ENCODE measurements at regions of chr13 and their contacts with region 1.

Region 1: GRCh38 chr13:19863323-19864023 is at the start of gene ZMYM5:
- DNase-seq: peak; percentile 90 to 95 (median 92)
- H3K4me3 ChIP-seq: peak within 1 kb of the TSS; percentile 61 to 96
- H3K4me3 Mint-ChIP-seq: peak within 1 kb of the TSS; percentile 96 to 99 (median 98)
- H3K27ac ChIP-seq: peak within 1 kb of the TSS; percentile 81
- H3K27ac Mint-ChIP-seq: peak within 1 kb of the TSS; percentile 90 to 98 (median 96)
- H3K4me1 ChIP-seq: peaks cover 33% of the 10 kb centered on the region
- H3K4me1 Mint-ChIP-seq: peaks cover 23 to 47% (median 35%) of the 10 kb centered on the region in 4 donors
- H3K27me3 ChIP-seq: no peaks in the 10 kb centered on the region
- H3K27me3 Mint-ChIP-seq: no peaks in the 10 kb centered on the region
- total RNA-seq, gene ZMYM5: 25.1 to 25.5 TPM

Region 2: DNA sequence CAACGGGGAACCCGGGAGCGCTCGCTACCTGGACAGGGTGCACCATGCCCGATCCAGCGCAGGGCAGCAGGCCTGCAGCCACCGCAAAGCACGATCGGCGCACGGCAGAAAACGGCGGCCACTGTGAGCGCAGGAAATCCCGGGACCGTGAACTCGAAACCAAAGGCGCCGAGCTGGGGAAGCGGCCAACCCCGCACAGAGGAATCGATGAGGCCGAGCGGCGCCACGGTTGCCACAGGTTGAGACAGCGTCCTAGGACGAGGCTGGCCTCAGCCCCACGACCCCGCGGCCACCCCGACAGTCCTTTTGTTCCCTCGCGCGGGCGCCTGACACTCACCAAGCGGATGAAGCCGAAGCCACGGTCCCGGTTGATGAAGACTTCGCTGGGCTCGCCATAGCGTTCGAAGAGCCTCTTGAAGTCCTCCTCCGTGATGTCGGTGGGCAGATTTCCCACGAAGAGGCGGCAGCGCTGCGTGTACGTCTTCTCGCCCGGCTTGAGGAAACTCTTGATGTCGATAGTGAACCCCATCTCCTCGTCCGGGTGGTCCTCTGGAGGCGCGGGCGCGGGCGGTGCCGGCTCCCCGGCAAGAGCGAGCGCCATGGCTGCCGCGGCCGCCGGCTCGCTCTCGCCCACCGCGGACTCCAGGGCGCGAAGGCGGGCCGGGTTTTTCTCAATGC is 81.3 kb before region 1 on chr13:
- CTCF ChIA-PET with region 1: interaction called, 3 read pairs
- POLR2A ChIA-PET with region 1: interaction called, 82 read pairs
- intact Hi-C with region 1: loop called (anchors 1 kb)
- DNase-seq: peak; percentile 52 to 57 (median 55)
- H3K4me3 ChIP-seq: peak overlapping the region; percentile 93 to 95
- H3K4me3 Mint-ChIP-seq: peak overlapping the region; percentile 97 to 99 (median 98)
- H3K27ac ChIP-seq: peak overlapping the region; percentile 88
- H3K27ac Mint-ChIP-seq: peak overlapping the region; percentile 98 to 99 (median 99)
- H3K4me1 ChIP-seq: peaks cover 6% of the 10 kb centered on the region
- H3K4me1 Mint-ChIP-seq: peaks cover 2 to 14% (median 5%) of the 10 kb centered on the region in 4 donors
- H3K27me3 ChIP-seq: no peaks in the 10 kb centered on the region
- H3K27me3 Mint-ChIP-seq: no peaks in the 10 kb centered on the region

Region 3: DNA sequence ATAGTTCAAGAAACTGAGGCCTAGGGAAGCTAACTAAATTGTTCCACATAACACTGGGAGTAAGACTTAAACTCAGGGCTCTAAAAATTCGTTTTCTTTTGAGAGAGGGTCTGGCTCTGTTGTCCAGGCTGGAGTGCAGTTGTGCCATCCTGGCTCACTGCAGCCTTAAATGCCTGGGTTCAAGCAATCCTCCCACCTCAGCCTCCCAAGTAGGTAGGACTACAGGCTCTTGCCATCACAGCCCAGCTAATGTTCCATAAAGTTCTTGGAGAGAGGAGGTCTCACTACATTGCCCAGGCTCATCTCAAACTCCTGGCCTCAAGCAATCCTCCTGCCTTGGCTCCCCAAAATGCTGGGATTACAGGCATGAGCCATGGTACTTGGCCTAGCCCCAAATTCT is 10.7 kb before region 1 on chr13:
- CTCF ChIA-PET with region 1: interaction called, 10 read pairs
- POLR2A ChIA-PET with region 1: interaction called, 18 read pairs
- intact Hi-C with region 1: no loop called
- DNase-seq: no peak
- H3K4me3 ChIP-seq: no peak overlapping the region
- H3K4me3 Mint-ChIP-seq: peak overlapping the region in 1 of 8 donors; percentile 34
- H3K27ac ChIP-seq: no peak overlapping the region
- H3K27ac Mint-ChIP-seq: peak overlapping the region in 1 of 7 donors; percentile 76
- H3K4me1 ChIP-seq: peaks cover 30% of the 10 kb centered on the region
- H3K4me1 Mint-ChIP-seq: peaks cover 16 to 34% (median 22%) of the 10 kb centered on the region in 4 donors
- H3K27me3 ChIP-seq: no peaks in the 10 kb centered on the region
- H3K27me3 Mint-ChIP-seq: no peaks in the 10 kb centered on the region

Region 4: GRCh38 chr13:19978831-19979437 is 115.5 kb after region 1 on chr13:
- CTCF ChIA-PET with region 1: no interaction called
- POLR2A ChIA-PET with region 1: no interaction called
- intact Hi-C with region 1: loop called (anchors 5 kb)
- DNase-seq: no peak
- H3K4me3 ChIP-seq: no peak overlapping the region
- H3K4me3 Mint-ChIP-seq: peak overlapping the region in 1 of 8 donors; percentile 43
- H3K27ac ChIP-seq: no peak overlapping the region
- H3K27ac Mint-ChIP-seq: peak overlapping the region in 1 of 7 donors; percentile 71
- H3K4me1 ChIP-seq: peaks cover 12% of the 10 kb centered on the region
- H3K4me1 Mint-ChIP-seq: peaks cover 31 to 55% (median 34%) of the 10 kb centered on the region in 4 donors
- H3K27me3 ChIP-seq: no peaks in the 10 kb centered on the region
- H3K27me3 Mint-ChIP-seq: no peaks in the 10 kb centered on the region

Region 5: GRCh38 chr13:20160847-20161274 is 297.4 kb after region 1 on chr13 and contains the start of gene GJA3:
- CTCF ChIA-PET with region 1: no interaction called
- POLR2A ChIA-PET with region 1: no interaction called
- intact Hi-C with region 1: loop called (anchors 1 kb)
- DNase-seq: peak in 4 of 5 donors; percentile 26 to 37 (median 32)
- H3K4me3 ChIP-seq: peak within 1 kb of the TSS in 1 of 2 donors; percentile 37
- H3K4me3 Mint-ChIP-seq: peak within 1 kb of the TSS; percentile 75 to 88 (median 85)
- H3K27ac ChIP-seq: no peak within 1 kb of the TSS
- H3K27ac Mint-ChIP-seq: peak within 1 kb of the TSS in 4 of 7 donors; percentile 36 to 85 (median 56)
- H3K4me1 ChIP-seq: peaks cover 19% of the 10 kb centered on the region
- H3K4me1 Mint-ChIP-seq: peaks cover 7 to 24% (median 17%) of the 10 kb centered on the region in 4 donors
- H3K27me3 ChIP-seq: peaks cover 11% of the 10 kb centered on the region
- H3K27me3 Mint-ChIP-seq: peaks cover 25 to 41% of the 10 kb centered on the region in 2 donors
- total RNA-seq, gene GJA3: 0.09 TPM in 1 of 2 experiments, not detected in the other